ENCODE measurements at regions of chr15 and their contacts with region 1.

Region 1: GRCh38 chr15:56918046-56918938 is at the start of gene TCF12:
- DNase-seq: peak; percentile 96

Region 2: GRCh38 chr15:57306161-57306943 is 388.1 kb after region 1 on chr15:
- in situ Hi-C with region 1: loop called (anchors 25 kb)
- DNase-seq: peak; percentile 87